Posterior vena cava (tissue), 2 donors: ENCODE measurements at regions of chr7 and their contacts with region 1.

Region 1: DNA sequence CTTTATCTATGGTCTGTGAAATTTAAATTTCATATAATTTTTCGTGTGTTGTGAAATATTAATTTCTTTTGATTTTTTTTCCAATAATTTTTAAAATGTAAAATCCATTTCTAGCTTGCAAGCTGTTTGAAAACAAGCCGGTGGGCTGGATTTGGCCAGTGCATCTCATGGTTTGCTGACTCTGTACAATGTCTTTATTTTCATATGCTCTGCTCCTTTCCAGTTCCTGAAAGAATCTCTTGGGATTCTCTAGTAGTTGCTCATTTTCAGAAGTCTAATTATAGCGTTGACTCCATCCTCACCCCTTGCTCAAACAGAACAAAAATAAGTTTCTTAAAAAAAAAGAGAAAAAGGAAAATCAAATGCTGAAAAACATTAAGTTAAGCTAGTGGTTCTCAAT is 21.4 kb downstream of the UBN2 start:
- DNase-seq: no peak

Region 2: DNA sequence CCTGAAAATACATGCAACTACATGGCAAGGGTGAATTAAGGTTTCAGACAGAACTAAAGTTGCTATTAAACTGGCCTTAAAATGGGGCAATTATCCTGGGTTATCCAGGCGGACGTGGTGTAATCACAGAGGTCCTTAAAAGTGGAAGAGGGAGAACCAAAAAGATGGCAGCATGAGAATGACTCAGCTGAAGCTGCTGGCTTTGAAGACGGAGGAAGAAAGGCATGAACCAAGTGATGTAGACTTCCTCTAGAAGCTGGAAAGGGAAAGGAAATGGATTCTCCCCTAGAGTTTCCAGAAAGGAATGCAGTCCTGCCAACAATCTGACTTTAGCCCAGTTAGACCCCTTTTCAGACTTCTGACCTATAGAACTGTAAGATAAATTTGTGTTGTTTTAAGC is 48.5 kb before region 1 on chr7:
- intact Hi-C with region 1: loop called in 1 of 2 experiments (anchors 2 kb)
- DNase-seq: no peak

Region 3: DNA sequence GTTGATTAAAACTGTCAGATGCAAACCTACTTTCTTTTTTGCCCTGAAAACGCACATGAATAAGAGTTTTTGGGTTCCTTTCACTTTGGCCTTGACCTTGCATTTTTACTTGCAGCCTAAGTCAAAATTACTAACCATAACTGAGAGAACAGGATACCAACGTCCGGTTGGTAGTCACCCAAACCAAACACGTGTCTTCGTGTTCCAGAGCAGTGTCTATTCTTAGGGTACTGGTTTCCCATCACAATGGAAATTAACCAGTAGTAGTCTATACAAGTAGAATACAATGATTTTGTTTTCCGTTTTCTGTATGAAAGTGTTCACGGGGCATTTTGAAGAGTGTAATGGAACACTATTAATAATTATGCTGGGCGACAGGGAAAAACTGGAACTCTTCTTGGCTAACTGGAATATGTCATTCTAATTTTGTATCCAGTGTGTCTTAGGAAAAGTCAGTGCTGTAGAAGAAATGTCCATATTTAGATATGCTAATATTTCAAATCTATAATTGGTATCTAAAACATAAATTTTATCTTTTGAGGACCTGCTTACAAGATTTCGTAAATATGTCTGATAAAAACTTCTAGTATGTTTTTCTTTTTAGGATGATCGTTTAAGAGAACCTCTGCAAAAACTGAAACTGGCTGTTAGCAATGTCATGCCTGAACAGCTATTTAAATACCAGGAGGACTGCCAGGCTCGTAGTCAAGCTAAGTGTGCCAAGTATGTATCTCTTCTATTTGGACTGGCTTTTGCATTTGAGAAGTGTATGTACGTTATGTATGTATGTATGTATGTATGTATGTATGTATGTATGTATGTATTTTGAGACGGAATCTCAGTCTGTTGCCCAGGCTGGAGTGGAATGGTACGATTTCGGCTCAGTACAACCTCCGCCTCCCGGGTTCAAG is 19.5 kb after region 1 on chr7:
- intact Hi-C with region 1: no loop called
- DNase-seq: no peak